Endothelial cell of umbilical vein (primary cell): ENCODE measurements at regions of chr16 and their contacts with region 1.

Region 1: GRCh38 chr16:70251629-70252354 is at the start of gene EXOSC6:
- DNase-seq: peak; percentile 95
- H3K4me3 ChIP-seq: peak within 1 kb of the TSS; percentile 64 to 67 (median 66)
- H3K27ac ChIP-seq: peak within 1 kb of the TSS; percentile 54
- H3K4me1 ChIP-seq: peaks cover 3% of the 10 kb centered on the region
- H3K27me3 ChIP-seq: no peaks in the 10 kb centered on the region
- CTCF ChIP-seq: peak; percentile 96 to 97
- POLR2A ChIP-seq: peak; percentile 86
- total RNA-seq, gene EXOSC6: 29.2 and 30.6 TPM in 2 replicates

Region 2: DNA sequence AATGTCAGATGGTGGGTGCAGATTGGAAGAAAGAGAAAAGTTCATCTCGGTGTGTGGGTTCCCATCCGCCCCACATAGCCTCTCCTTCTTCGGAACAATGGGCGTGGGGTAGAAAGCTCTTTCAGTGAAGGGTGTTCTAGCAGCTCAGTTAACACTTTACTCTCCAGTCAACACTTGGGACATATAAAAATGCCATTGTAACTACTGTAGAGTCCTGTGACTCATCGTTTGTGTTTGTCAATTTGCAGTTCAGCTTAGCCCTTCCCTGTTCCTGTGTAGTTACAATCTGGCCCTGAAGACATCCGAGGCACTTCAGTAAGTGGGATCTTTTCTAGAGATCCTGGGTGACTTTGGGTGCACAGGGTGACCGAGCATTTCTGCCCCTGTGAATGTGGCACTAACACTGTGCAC is 89.7 kb before region 1 on chr16:
- CTCF ChIA-PET with region 1: interaction called, 10 read pairs
- POLR2A ChIA-PET with region 1: no interaction called
- dilution Hi-C with region 1: no loop called
- intact Hi-C with region 1: loop called (anchors 1 kb)
- DNase-seq: peak; percentile 60
- H3K4me3 ChIP-seq: no peak overlapping the region
- H3K27ac ChIP-seq: no peak overlapping the region
- H3K4me1 ChIP-seq: peaks cover 9% of the 10 kb centered on the region
- H3K27me3 ChIP-seq: no peaks in the 10 kb centered on the region
- CTCF ChIP-seq: no peak
- POLR2A ChIP-seq: no peak

Region 3: DNA sequence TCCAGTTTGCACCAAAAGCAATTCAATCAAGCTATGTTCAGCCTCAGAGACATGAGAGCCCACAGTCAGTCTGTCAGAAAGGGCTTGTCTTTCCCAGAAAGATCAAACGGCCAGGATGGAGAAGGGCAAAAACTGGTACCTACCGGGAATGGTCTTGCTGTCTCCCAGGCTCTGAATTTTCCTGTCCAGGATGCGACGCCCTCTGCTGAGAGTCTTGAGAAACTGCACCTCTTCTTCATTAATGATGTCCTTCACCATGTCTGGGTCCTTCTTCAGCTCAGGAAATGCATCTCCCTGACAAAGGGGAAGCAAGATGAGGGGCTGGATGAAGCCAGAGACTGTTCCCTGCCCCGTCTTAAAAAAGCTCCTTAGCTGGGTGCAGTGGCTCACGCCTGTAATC is 15.7 kb after region 1 on chr16:
- CTCF ChIA-PET with region 1: interaction called, 12 read pairs
- POLR2A ChIA-PET with region 1: no interaction called
- dilution Hi-C with region 1: no loop called
- intact Hi-C with region 1: no loop called
- DNase-seq: peak; percentile 65
- H3K4me3 ChIP-seq: no peak overlapping the region
- H3K27ac ChIP-seq: no peak overlapping the region
- H3K4me1 ChIP-seq: no peaks in the 10 kb centered on the region
- H3K27me3 ChIP-seq: no peaks in the 10 kb centered on the region
- CTCF ChIP-seq: peak; percentile 71 to 76
- POLR2A ChIP-seq: no peak

Region 4: GRCh38 chr16:70470927-70471341 is 219.1 kb after region 1 on chr16:
- CTCF ChIA-PET with region 1: no interaction called
- POLR2A ChIA-PET with region 1: no interaction called
- dilution Hi-C with region 1: no loop called
- intact Hi-C with region 1: no loop called
- DNase-seq: peak; percentile 18
- H3K4me3 ChIP-seq: no peak overlapping the region
- H3K27ac ChIP-seq: no peak overlapping the region
- H3K4me1 ChIP-seq: no peaks in the 10 kb centered on the region
- H3K27me3 ChIP-seq: no peaks in the 10 kb centered on the region
- CTCF ChIP-seq: peak; percentile 36 to 58
- POLR2A ChIP-seq: no peak

Region 5: GRCh38 chr16:70523076-70523742 is 271.4 kb after region 1 on chr16 and contains the start of gene COG4:
- CTCF ChIA-PET with region 1: no interaction called
- POLR2A ChIA-PET with region 1: no interaction called
- dilution Hi-C with region 1: no loop called
- intact Hi-C with region 1: loop called (anchors 1 kb)
- DNase-seq: peak; percentile 84
- H3K4me3 ChIP-seq: peak within 1 kb of the TSS; percentile 54 to 94 (median 85)
- H3K27ac ChIP-seq: peak within 1 kb of the TSS; percentile 82
- H3K4me1 ChIP-seq: peaks cover 40% of the 10 kb centered on the region
- H3K27me3 ChIP-seq: no peaks in the 10 kb centered on the region
- CTCF ChIP-seq: no peak
- POLR2A ChIP-seq: peak; percentile 83
- total RNA-seq, gene COG4: 46.5 and 61.2 TPM in 2 replicates